CD4-positive, alpha-beta memory T cell (primary cell): ENCODE measurements at regions of chr6 and their contacts with region 1.

Region 1: GRCh38 chr6:87701676-87702588 is at the start of gene AKIRIN2:
- DNase-seq: peak; percentile 97 to 99 (median 99)
- H3K4me3 ChIP-seq: peak within 1 kb of the TSS; percentile 57 to 91
- H3K4me3 Mint-ChIP-seq: peak within 1 kb of the TSS; percentile 94 to 99 (median 96)
- H3K27ac ChIP-seq: peak within 1 kb of the TSS; percentile 93
- H3K27ac Mint-ChIP-seq: peak within 1 kb of the TSS; percentile 89 to 97 (median 97)
- H3K4me1 ChIP-seq: peaks cover 39% of the 10 kb centered on the region
- H3K4me1 Mint-ChIP-seq: peaks cover 24 to 58% (median 34%) of the 10 kb centered on the region in 4 donors
- H3K27me3 ChIP-seq: no peaks in the 10 kb centered on the region
- H3K27me3 Mint-ChIP-seq: no peaks in the 10 kb centered on the region
- total RNA-seq, gene AKIRIN2: 68.6 to 69.8 TPM

Region 2: GRCh38 chr6:85744433-85744970 is 1957.4 kb before region 1 on chr6:
- CTCF ChIA-PET with region 1: no interaction called
- POLR2A ChIA-PET with region 1: no interaction called
- intact Hi-C with region 1: no loop called
- DNase-seq: no peak
- H3K4me3 ChIP-seq: no peak overlapping the region
- H3K4me3 Mint-ChIP-seq: no peak overlapping the region
- H3K27ac ChIP-seq: no peak overlapping the region
- H3K27ac Mint-ChIP-seq: no peak overlapping the region
- H3K4me1 ChIP-seq: no peaks in the 10 kb centered on the region
- H3K4me1 Mint-ChIP-seq: no peaks in the 10 kb centered on the region
- H3K27me3 ChIP-seq: no peaks in the 10 kb centered on the region
- H3K27me3 Mint-ChIP-seq: peaks cover 4 to 9% of the 10 kb centered on the region in 2 donors

Region 3: GRCh38 chr6:87472525-87473418 is 229.2 kb before region 1 on chr6 and contains the start of gene SLC35A1:
- CTCF ChIA-PET with region 1: no interaction called
- POLR2A ChIA-PET with region 1: no interaction called
- intact Hi-C with region 1: loop called (anchors 2 kb)
- DNase-seq: peak; percentile 80 to 92 (median 86)
- H3K4me3 ChIP-seq: peak within 1 kb of the TSS; percentile 67 to 72
- H3K4me3 Mint-ChIP-seq: peak within 1 kb of the TSS; percentile 97 to 99 (median 99)
- H3K27ac ChIP-seq: peak within 1 kb of the TSS; percentile 94
- H3K27ac Mint-ChIP-seq: peak within 1 kb of the TSS; percentile 93 to 100 (median 100)
- H3K4me1 ChIP-seq: peaks cover 18% of the 10 kb centered on the region
- H3K4me1 Mint-ChIP-seq: peaks cover 9 to 27% (median 16%) of the 10 kb centered on the region in 4 donors
- H3K27me3 ChIP-seq: no peaks in the 10 kb centered on the region
- H3K27me3 Mint-ChIP-seq: peaks cover 0 to 2% of the 10 kb centered on the region in 2 donors
- total RNA-seq, gene SLC35A1: 20.4 to 26.2 TPM

Region 4: DNA sequence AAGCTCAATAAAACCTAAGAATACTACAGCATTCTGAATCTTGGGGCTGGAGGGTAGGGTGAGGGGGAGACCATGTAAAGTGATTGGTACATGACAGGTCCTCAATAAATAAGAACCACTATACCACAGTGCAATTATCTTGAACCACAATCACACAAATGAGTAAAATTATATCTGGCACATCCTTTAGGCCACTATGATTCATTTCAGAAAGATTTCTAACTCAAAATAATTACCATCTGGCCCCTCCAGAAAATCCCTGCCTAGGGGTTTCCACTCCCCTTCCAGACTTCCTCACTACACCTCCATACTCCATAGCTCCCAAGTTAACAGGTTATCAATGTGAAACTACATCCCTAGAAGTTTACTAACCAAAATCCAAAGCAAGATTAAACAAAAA is 19.6 kb before region 1 on chr6:
- CTCF ChIA-PET with region 1: interaction called, 7 read pairs
- POLR2A ChIA-PET with region 1: interaction called, 27 read pairs
- intact Hi-C with region 1: loop called (anchors 2 kb)
- DNase-seq: no peak
- H3K4me3 ChIP-seq: no peak overlapping the region
- H3K4me3 Mint-ChIP-seq: peak overlapping the region in 2 of 8 donors; percentile 43 to 52
- H3K27ac ChIP-seq: no peak overlapping the region
- H3K27ac Mint-ChIP-seq: peak overlapping the region in 6 of 7 donors; percentile 13 to 79 (median 70)
- H3K4me1 ChIP-seq: peaks cover 55% of the 10 kb centered on the region
- H3K4me1 Mint-ChIP-seq: peaks cover 51 to 83% (median 64%) of the 10 kb centered on the region in 4 donors
- H3K27me3 ChIP-seq: no peaks in the 10 kb centered on the region
- H3K27me3 Mint-ChIP-seq: no peaks in the 10 kb centered on the region

Region 5: GRCh38 chr6:87731818-87732661 is 30.1 kb after region 1 on chr6:
- CTCF ChIA-PET with region 1: interaction called, 4 read pairs
- POLR2A ChIA-PET with region 1: interaction called, 109 read pairs
- intact Hi-C with region 1: no loop called
- DNase-seq: peak; percentile 52 to 68 (median 61)
- H3K4me3 ChIP-seq: no peak overlapping the region
- H3K4me3 Mint-ChIP-seq: peak overlapping the region in 7 of 8 donors; percentile 22 to 78 (median 70)
- H3K27ac ChIP-seq: no peak overlapping the region
- H3K27ac Mint-ChIP-seq: peak overlapping the region; percentile 62 to 91 (median 78)
- H3K4me1 ChIP-seq: peaks cover 27% of the 10 kb centered on the region
- H3K4me1 Mint-ChIP-seq: peaks cover 18 to 43% (median 30%) of the 10 kb centered on the region in 4 donors
- H3K27me3 ChIP-seq: no peaks in the 10 kb centered on the region
- H3K27me3 Mint-ChIP-seq: no peaks in the 10 kb centered on the region

Region 6: GRCh38 chr6:87772597-87773530 is 70.9 kb after region 1 on chr6:
- CTCF ChIA-PET with region 1: no interaction called
- POLR2A ChIA-PET with region 1: no interaction called
- intact Hi-C with region 1: no loop called
- DNase-seq: no peak
- H3K4me3 ChIP-seq: no peak overlapping the region
- H3K4me3 Mint-ChIP-seq: no peak overlapping the region
- H3K27ac ChIP-seq: no peak overlapping the region
- H3K27ac Mint-ChIP-seq: no peak overlapping the region
- H3K4me1 ChIP-seq: no peaks in the 10 kb centered on the region
- H3K4me1 Mint-ChIP-seq: no peaks in the 10 kb centered on the region
- H3K27me3 ChIP-seq: no peaks in the 10 kb centered on the region
- H3K27me3 Mint-ChIP-seq: no peaks in the 10 kb centered on the region

Region 7: GRCh38 chr6:87832025-87832825 is 130.3 kb after region 1 on chr6:
- CTCF ChIA-PET with region 1: interaction called, 11 read pairs
- POLR2A ChIA-PET with region 1: interaction called, 14 read pairs
- intact Hi-C with region 1: loop called (anchors 1 kb)
- DNase-seq: peak in 4 of 5 donors; percentile 37 to 51 (median 44)
- H3K4me3 ChIP-seq: peak overlapping the region in 1 of 2 donors; percentile 46
- H3K4me3 Mint-ChIP-seq: peak overlapping the region; percentile 81 to 95 (median 90)
- H3K27ac ChIP-seq: peak overlapping the region; percentile 44
- H3K27ac Mint-ChIP-seq: peak overlapping the region; percentile 19 to 97 (median 95)
- H3K4me1 ChIP-seq: peaks cover 6% of the 10 kb centered on the region
- H3K4me1 Mint-ChIP-seq: peaks cover 0 to 6% (median 5%) of the 10 kb centered on the region in 4 donors
- H3K27me3 ChIP-seq: no peaks in the 10 kb centered on the region
- H3K27me3 Mint-ChIP-seq: no peaks in the 10 kb centered on the region

Region 8: GRCh38 chr6:87905101-87905641 is 203.2 kb after region 1 on chr6:
- CTCF ChIA-PET with region 1: no interaction called
- POLR2A ChIA-PET with region 1: no interaction called
- intact Hi-C with region 1: no loop called
- DNase-seq: no peak
- H3K4me3 ChIP-seq: no peak overlapping the region
- H3K4me3 Mint-ChIP-seq: no peak overlapping the region
- H3K27ac ChIP-seq: no peak overlapping the region
- H3K27ac Mint-ChIP-seq: no peak overlapping the region
- H3K4me1 ChIP-seq: peaks cover 19% of the 10 kb centered on the region
- H3K4me1 Mint-ChIP-seq: peaks cover 7 to 31% (median 19%) of the 10 kb centered on the region in 4 donors
- H3K27me3 ChIP-seq: no peaks in the 10 kb centered on the region
- H3K27me3 Mint-ChIP-seq: peaks cover 0 to 4% of the 10 kb centered on the region in 2 donors

Region 9: DNA sequence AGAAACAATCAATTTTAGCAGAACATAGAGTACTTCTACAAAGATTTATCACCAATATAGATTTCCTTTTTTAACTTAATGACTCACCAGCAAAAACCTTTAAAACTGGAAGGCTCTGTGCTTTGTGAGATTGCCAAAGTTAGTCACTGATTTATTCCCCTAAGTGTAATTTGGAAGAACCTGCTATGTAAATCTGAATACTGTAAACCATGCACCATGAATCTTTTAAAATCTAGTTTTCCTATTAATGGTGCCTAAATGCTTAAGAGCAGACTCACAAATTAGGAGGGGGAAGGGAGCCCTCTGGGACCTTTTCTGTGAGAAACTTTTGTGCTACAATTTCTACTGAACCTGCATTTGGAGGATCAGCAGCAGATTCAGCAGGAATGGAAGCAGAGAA is 1320.9 kb after region 1 on chr6:
- CTCF ChIA-PET with region 1: no interaction called
- POLR2A ChIA-PET with region 1: no interaction called
- intact Hi-C with region 1: no loop called
- DNase-seq: no peak
- H3K4me3 ChIP-seq: no peak overlapping the region
- H3K4me3 Mint-ChIP-seq: no peak overlapping the region
- H3K27ac ChIP-seq: no peak overlapping the region
- H3K27ac Mint-ChIP-seq: no peak overlapping the region
- H3K4me1 ChIP-seq: no peaks in the 10 kb centered on the region
- H3K4me1 Mint-ChIP-seq: no peaks in the 10 kb centered on the region
- H3K27me3 ChIP-seq: no peaks in the 10 kb centered on the region
- H3K27me3 Mint-ChIP-seq: peaks cover 0 to 4% of the 10 kb centered on the region in 2 donors